MCF 10A (cell line): ENCODE measurements at regions of chr7 and their contacts with region 1.

Region 1: GRCh38 chr7:33932832-33933468 is 27.6 kb downstream of the BMPER start:
- DNase-seq: peak; percentile 84
- H3K4me3 Mint-ChIP-seq: no peak overlapping the region
- H3K27ac Mint-ChIP-seq: peak overlapping the region; percentile 19
- H3K4me1 Mint-ChIP-seq: peaks cover 19% of the 10 kb centered on the region
- H3K27me3 Mint-ChIP-seq: no peaks in the 10 kb centered on the region
- CTCF ChIP-seq: peak; percentile 88

Region 2: GRCh38 chr7:33334349-33334748 is 598.6 kb before region 1 on chr7:
- CTCF ChIA-PET with region 1: interaction called, 18 read pairs
- POLR2A ChIA-PET with region 1: no interaction called
- intact Hi-C with region 1: loop called (anchors 1 kb)
- DNase-seq: peak; percentile 39
- H3K4me3 Mint-ChIP-seq: no peak overlapping the region
- H3K27ac Mint-ChIP-seq: no peak overlapping the region
- H3K4me1 Mint-ChIP-seq: no peaks in the 10 kb centered on the region
- H3K27me3 Mint-ChIP-seq: no peaks in the 10 kb centered on the region
- CTCF ChIP-seq: peak; percentile 41

Region 3: GRCh38 chr7:33716581-33717477 is 216.1 kb before region 1 on chr7:
- CTCF ChIA-PET with region 1: interaction called, 20 read pairs
- POLR2A ChIA-PET with region 1: no interaction called
- intact Hi-C with region 1: loop called (anchors 1 kb)
- DNase-seq: peak; percentile 63
- H3K4me3 Mint-ChIP-seq: no peak overlapping the region
- H3K27ac Mint-ChIP-seq: no peak overlapping the region
- H3K4me1 Mint-ChIP-seq: peaks cover 5% of the 10 kb centered on the region
- H3K27me3 Mint-ChIP-seq: peaks cover 15% of the 10 kb centered on the region
- CTCF ChIP-seq: peak; percentile 81

Region 4: DNA sequence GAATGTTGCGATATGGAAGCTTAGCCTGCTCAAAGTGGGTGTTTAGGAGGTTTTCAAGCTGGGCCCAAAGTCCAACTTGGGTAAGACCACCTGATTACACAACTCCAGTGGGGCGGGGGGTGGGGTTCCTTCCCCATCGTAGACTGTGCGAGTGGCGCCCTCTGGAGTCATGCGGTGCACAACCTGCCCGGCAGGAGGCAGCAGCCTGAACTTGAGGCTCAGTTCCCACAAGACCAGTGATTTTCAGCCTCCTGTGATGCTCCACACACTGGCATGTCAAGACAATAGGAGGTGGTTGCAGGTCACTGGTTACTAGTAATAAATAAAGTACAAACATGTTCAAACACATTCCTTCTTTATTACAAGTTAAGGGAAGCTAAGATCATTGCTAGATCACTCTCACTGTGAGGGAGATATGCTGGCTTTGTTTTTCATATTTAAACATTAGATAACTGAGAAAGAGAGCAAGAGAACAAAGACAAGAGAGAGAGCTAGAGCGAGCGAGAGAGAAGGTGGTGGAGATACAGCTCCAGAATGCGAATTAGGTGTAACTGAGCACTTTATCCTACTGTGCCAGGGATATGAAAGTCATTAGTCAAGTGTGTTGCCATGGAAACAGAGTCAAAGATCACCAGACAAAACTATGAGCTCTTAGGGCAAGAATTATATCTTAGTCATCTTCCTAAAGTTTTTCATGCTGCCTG is 125.0 kb before region 1 on chr7:
- CTCF ChIA-PET with region 1: interaction called, 14 read pairs
- POLR2A ChIA-PET with region 1: interaction called, 3 read pairs
- intact Hi-C with region 1: no loop called
- DNase-seq: peak; percentile 59
- H3K4me3 Mint-ChIP-seq: no peak overlapping the region
- H3K27ac Mint-ChIP-seq: peak overlapping the region; percentile 1
- H3K4me1 Mint-ChIP-seq: peaks cover 16% of the 10 kb centered on the region
- H3K27me3 Mint-ChIP-seq: no peaks in the 10 kb centered on the region
- CTCF ChIP-seq: peak; percentile 39

Region 5: DNA sequence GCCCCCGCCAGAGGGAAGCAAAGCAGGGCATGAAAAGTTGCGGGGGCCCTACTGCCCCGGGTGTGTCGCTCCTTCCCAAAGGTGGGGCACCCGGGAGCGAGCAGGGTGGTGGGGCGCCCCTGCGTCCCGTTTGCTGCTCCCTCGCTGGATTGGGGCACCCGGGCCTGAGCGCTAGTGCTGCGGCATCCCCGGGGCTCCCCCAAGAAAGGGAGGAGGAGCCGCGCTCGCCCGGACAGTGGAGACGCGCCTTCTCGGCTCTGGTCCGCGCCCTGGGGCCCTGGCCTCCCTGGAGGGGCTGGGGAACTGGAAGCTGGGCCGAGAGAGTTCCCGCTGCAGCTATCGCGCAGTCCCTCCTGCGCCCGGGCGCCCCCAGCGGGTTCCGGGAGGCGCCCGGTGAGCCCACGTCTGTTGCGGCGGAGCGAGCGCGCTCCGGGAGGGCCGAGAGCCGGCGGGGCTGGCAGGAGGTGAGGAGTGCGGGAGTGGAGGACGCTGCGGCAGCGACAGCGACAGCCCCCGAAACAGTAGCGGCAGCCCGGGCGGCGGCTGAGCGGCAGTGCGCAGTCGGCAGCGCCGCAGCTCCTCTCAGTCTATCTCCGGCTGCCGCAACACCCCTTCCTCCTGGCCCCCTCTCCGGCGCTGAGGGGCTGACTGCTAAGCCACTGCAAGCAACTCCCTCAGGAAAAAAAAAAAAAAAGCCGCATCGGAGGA is 28.1 kb before region 1 on chr7:
- CTCF ChIA-PET with region 1: interaction called, 35 read pairs
- POLR2A ChIA-PET with region 1: interaction called, 3 read pairs
- intact Hi-C with region 1: no loop called
- DNase-seq: no peak
- H3K4me3 Mint-ChIP-seq: peak overlapping the region; percentile 54
- H3K27ac Mint-ChIP-seq: no peak overlapping the region
- H3K4me1 Mint-ChIP-seq: no peaks in the 10 kb centered on the region
- H3K27me3 Mint-ChIP-seq: peaks cover 65% of the 10 kb centered on the region
- CTCF ChIP-seq: no peak

Region 6: GRCh38 chr7:33973221-33974015 is 40.5 kb after region 1 on chr7:
- CTCF ChIA-PET with region 1: interaction called, 11 read pairs
- POLR2A ChIA-PET with region 1: no interaction called
- intact Hi-C with region 1: no loop called
- DNase-seq: no peak
- H3K4me3 Mint-ChIP-seq: no peak overlapping the region
- H3K27ac Mint-ChIP-seq: no peak overlapping the region
- H3K4me1 Mint-ChIP-seq: no peaks in the 10 kb centered on the region
- H3K27me3 Mint-ChIP-seq: no peaks in the 10 kb centered on the region
- CTCF ChIP-seq: no peak

Region 7: DNA sequence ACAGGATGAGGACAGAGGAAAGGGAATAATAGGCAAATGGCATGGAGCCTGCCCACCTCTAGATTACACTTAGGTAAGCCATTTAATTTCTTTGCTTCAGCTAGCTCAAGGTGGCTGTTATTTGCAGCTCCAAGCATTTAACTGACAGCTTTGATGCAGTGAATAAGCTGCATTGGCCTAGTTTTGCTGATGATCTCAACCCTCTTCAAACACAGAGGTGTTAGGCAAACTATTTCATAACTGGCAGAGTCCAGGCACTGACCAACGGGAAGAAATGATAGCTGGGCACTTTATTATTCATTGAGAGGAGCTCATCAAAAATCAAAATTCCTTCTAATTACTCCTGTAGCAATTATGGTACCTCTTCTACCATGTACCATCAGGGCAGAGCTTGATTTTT is 289.8 kb after region 1 on chr7:
- CTCF ChIA-PET with region 1: no interaction called
- POLR2A ChIA-PET with region 1: no interaction called
- intact Hi-C with region 1: no loop called
- DNase-seq: no peak
- H3K4me3 Mint-ChIP-seq: no peak overlapping the region
- H3K27ac Mint-ChIP-seq: no peak overlapping the region
- H3K4me1 Mint-ChIP-seq: no peaks in the 10 kb centered on the region
- H3K27me3 Mint-ChIP-seq: no peaks in the 10 kb centered on the region
- CTCF ChIP-seq: no peak